Activated naive CD4-positive, alpha-beta T cell treated with anti-CD3 and anti-CD28 coated beads for 36 hours (primary cell): ENCODE measurements at regions of chr16 and their contacts with region 1.

Region 1: DNA sequence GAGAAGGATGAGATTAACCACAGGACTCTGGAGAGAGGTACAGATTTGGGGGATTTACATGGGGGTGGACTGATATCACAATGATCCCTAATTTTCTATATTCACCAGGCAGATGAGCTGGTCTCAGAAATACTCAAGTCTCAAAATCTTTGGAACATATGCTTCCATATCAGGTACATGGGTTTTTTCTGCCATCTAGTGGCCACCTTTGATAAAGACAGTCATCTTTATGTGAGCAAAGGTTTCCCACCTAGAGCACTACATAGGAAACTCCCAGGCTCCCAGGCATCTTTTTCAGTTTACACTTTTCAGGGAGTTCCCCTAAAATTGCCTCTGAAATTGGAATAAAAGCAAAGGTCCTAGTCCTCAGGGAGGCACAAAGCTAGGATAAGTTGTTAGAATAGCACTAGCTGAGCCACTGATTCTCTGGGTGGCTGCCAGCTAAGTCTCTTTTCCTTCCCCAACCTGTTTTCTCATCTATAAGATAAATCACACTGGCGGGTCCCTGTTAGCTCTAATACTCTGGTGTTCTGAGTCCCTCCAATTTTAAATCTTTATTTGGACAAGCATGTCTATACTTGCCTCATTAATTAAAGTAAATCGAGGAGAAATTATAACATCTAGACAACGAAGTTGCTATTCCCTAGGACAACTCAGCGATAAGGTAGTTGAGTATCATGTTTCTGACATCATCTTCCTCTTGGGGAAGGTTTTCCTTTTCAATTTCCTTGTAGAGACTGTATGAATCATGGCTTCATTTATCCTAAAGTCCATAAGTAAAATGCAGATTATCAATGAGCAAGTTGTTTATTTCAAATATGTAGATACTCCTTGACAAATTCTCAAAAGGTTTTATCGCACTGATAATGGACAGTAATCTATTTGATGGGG is 19.0 kb upstream of the MON1B start:
- DNase-seq: peak; percentile 38
- H3K4me3 Mint-ChIP-seq: no peak overlapping the region
- H3K27ac Mint-ChIP-seq: no peak overlapping the region
- H3K4me1 Mint-ChIP-seq: no peaks in the 10 kb centered on the region
- H3K27me3 Mint-ChIP-seq: peaks cover 40% of the 10 kb centered on the region

Region 2: DNA sequence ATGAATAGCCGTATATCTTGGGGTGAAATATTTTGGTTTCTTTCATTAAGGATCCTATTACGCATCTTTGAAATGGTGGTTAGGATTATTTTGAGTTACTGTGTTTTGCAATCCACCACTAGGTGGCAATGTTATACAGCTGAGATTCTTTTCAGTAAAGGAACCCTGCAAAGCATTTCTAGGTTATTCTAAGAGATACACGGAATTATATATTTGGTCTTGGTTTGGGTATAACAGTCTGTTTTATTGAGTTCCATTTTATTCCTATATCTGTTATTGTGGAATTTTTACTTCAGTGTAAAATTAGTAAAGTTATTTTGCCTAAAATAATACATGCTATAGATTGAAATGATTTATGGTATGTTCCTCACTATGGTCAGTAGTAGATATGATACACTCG is 1382.8 kb before region 1 on chr16:
- CTCF ChIA-PET with region 1: interaction called, 7 read pairs
- intact Hi-C with region 1: loop called (anchors 1 kb)
- DNase-seq: no peak
- H3K4me3 Mint-ChIP-seq: no peak overlapping the region
- H3K27ac Mint-ChIP-seq: no peak overlapping the region
- H3K4me1 Mint-ChIP-seq: no peaks in the 10 kb centered on the region
- H3K27me3 Mint-ChIP-seq: peaks cover 3% of the 10 kb centered on the region

Region 3: DNA sequence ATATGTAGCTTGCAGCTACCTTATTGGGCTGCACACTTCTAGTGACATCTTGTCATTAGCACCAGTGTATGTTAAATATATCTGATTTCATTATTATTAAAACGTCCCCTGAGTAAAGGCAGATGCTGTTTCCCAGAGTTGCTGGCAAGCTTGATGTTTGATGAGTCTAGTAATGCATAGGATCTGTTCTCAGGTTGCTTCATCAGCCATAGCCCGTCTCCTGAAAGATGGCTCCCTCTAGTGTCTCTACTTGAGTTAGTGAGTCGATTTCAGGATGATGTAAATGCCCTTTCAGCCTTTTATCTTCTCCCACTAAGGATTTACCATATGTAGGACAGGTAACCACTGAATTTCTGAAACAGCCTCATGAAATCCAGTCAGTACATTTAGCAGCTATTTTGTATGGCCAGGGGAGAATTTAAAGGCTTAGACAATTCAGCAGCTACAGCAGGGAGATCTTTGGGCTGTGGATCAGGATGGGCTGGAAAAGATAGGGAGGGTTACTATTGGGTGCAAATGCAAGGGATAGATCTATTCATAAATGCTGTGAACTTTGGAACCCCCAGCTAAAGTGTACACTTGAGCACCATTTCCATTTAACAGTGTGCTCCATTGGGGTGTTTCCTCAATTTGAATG is 518.5 kb before region 1 on chr16:
- CTCF ChIA-PET with region 1: interaction called, 5 read pairs
- intact Hi-C with region 1: loop called (anchors 1 kb)
- DNase-seq: peak; percentile 10
- H3K4me3 Mint-ChIP-seq: no peak overlapping the region
- H3K27ac Mint-ChIP-seq: no peak overlapping the region
- H3K4me1 Mint-ChIP-seq: no peaks in the 10 kb centered on the region
- H3K27me3 Mint-ChIP-seq: no peaks in the 10 kb centered on the region

Region 4: GRCh38 chr16:76724181-76724580 is 447.8 kb before region 1 on chr16:
- CTCF ChIA-PET with region 1: no interaction called
- intact Hi-C with region 1: no loop called
- DNase-seq: no peak
- H3K4me3 Mint-ChIP-seq: no peak overlapping the region
- H3K27ac Mint-ChIP-seq: no peak overlapping the region
- H3K4me1 Mint-ChIP-seq: no peaks in the 10 kb centered on the region
- H3K27me3 Mint-ChIP-seq: no peaks in the 10 kb centered on the region

Region 5: DNA sequence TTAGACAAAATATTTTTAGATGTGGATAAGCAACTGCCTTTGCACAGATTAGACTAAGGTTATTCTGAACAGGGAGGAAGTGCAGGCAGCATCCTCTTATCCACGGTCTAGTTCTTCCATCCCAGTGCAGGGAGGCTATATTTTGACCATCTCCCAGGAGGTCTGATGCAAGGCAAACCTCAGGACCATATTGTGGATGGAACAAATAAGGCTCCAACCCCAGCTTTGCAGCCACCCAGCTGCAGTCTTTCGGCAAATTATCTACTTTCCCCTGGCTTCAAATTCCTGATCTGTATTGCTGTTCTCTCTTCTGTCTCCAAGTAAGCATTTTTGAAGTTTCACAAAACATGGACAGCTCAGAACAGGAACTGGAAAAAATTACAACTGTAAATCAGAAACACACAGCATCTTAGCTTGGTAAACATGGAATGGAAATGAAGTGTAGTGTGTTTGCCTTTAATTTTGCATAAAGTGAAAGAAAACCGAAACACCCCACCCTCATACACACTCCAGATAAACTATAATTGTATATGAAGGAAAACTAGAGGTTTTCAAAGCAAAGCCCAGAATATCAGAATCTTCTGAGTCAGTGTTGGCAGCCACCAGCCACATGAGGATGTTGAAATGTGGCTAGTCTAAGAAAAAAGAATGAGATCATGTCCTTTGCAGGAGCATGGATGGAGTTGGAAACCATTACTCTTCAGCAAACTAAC is 14.5 kb before region 1 on chr16:
- CTCF ChIA-PET with region 1: interaction called, 17 read pairs
- intact Hi-C with region 1: no loop called
- DNase-seq: no peak
- H3K4me3 Mint-ChIP-seq: no peak overlapping the region
- H3K27ac Mint-ChIP-seq: no peak overlapping the region
- H3K4me1 Mint-ChIP-seq: no peaks in the 10 kb centered on the region
- H3K27me3 Mint-ChIP-seq: peaks cover 35% of the 10 kb centered on the region